Activated CD8-positive, alpha-beta T cell treated with anti-CD3 and anti-CD28 coated beads for 36 hours (primary cell): ENCODE measurements at regions of chr3 and their contacts with region 1.

Region 1: GRCh38 chr3:48674505-48674904 is 11.2 kb downstream of the NCKIPSD start:
- DNase-seq: no peak
- ATAC-seq: no peak
- H3K4me3 Mint-ChIP-seq: no peak overlapping the region
- H3K27ac Mint-ChIP-seq: no peak overlapping the region
- H3K4me1 Mint-ChIP-seq: no peaks in the 10 kb centered on the region
- H3K27me3 Mint-ChIP-seq: no peaks in the 10 kb centered on the region
- CTCF ChIP-seq: no peak

Region 2: DNA sequence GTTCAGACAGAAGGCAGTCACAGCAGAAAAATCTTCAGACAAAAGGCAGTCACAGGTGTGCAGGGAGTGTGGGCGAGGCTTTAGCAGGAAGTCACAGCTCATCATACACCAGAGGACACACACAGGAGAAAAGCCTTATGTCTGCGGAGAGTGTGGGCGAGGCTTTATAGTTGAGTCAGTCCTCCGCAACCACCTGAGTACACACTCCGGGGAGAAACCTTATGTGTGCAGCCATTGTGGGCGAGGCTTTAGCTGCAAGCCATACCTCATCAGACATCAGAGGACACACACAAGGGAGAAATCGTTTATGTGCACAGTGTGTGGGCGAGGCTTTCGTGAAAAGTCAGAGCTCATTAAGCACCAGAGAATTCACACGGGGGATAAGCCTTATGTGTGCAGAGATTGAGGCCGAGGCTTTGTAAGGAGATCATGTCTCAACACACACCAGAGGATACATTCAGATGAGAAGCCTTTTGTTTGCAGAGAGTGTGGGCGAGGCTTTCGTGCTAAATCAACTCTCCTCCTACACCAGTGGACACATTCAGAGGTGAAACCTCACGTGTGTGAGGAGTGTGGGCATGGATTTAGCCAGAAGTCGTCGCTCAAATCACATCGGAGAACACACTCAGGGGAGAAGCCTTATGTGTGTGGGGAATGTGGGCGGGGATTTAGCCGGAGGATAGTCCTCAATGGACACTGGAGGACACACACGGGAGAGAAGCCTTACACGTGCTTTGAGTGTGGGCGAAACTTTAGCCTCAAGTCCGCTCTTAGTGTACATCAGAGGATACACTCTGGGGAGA is 405.9 kb before region 1 on chr3:
- CTCF ChIA-PET with region 1: no interaction called
- POLR2A ChIA-PET with region 1: no interaction called
- intact Hi-C with region 1: no loop called
- DNase-seq: peak; percentile 98
- ATAC-seq: peak; percentile 93
- H3K4me3 Mint-ChIP-seq: peak overlapping the region; percentile 61
- H3K27ac Mint-ChIP-seq: peak overlapping the region; percentile 98
- H3K4me1 Mint-ChIP-seq: peaks cover 42% of the 10 kb centered on the region
- H3K27me3 Mint-ChIP-seq: no peaks in the 10 kb centered on the region
- CTCF ChIP-seq: no peak

Region 3: GRCh38 chr3:48532271-48532976 is 142.1 kb before region 1 on chr3:
- CTCF ChIA-PET with region 1: no interaction called
- POLR2A ChIA-PET with region 1: no interaction called
- intact Hi-C with region 1: no loop called
- DNase-seq: no peak
- ATAC-seq: no peak
- H3K4me3 Mint-ChIP-seq: no peak overlapping the region
- H3K27ac Mint-ChIP-seq: no peak overlapping the region
- H3K4me1 Mint-ChIP-seq: no peaks in the 10 kb centered on the region
- H3K27me3 Mint-ChIP-seq: no peaks in the 10 kb centered on the region
- CTCF ChIP-seq: no peak

Region 4: DNA sequence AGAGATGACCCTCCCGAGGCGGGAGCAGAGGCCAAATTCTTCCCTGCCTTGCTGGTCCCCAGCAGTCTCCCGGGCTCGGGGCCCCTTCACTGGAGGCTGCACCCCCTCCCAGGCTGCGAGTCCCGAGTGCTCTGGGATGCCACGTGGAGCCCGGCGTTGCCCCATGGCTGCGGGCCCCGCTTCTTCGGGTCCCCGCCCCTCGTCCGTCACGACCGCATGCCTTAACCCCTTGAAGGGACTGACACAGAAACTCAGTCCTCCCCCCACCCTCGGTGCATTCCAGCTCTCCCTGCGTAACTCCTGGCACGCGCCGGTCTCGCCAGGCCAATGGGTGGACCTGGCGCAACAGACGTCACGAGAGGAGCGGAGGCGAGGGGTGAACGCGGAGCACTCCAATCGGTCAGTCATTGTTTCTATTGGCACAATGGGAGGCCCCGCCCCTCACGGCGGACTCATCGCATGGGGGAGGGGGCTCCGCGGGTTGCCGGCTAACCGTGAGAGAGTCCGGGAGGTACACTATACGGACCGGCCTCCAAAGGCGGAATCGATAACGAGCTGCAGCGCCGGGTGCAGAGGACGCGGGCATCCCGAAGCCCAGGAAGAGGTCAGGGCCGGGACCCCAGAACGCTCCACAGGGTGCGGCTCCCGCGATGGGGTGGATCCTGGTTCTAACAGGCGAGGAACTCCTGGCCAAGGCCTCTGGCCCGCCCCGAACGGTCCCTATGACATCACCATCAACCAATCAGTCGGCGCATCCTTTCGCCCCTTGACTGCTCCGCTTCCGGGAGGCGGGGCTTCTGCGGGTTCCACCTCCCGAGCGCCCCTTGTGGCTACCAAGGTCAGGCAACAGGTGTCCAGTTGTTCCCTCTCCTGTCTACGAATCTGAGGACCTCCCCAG is 10.8 kb before region 1 on chr3:
- CTCF ChIA-PET with region 1: interaction called, 5 read pairs
- POLR2A ChIA-PET with region 1: interaction called, 26 read pairs
- intact Hi-C with region 1: no loop called
- DNase-seq: peak; percentile 97
- ATAC-seq: peak; percentile 87
- H3K4me3 Mint-ChIP-seq: peak overlapping the region; percentile 82
- H3K27ac Mint-ChIP-seq: peak overlapping the region; percentile 85
- H3K4me1 Mint-ChIP-seq: peaks cover 17% of the 10 kb centered on the region
- H3K27me3 Mint-ChIP-seq: peaks cover 21% of the 10 kb centered on the region
- CTCF ChIP-seq: peak; percentile 88

Region 5: DNA sequence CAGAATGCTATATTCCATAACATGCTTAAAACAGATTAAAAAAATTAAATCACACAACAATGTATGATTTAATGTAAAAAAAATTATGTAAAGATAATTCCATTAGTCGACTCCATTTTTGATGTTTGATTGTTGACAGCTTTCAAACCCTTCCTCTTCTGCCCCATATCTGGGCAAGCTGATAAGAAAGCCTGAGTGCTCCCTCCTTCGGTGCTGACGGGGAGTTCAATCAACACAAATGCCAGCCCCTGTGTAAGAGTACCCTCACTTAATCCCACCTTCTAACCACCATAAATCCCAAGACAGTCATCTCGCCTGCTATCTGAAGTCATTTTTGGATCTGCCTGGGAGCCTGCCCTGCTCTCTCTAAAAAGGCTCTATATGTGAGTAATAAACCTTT is 102.3 kb after region 1 on chr3:
- CTCF ChIA-PET with region 1: no interaction called
- POLR2A ChIA-PET with region 1: no interaction called
- intact Hi-C with region 1: no loop called
- DNase-seq: no peak
- ATAC-seq: no peak
- H3K4me3 Mint-ChIP-seq: no peak overlapping the region
- H3K27ac Mint-ChIP-seq: no peak overlapping the region
- H3K4me1 Mint-ChIP-seq: no peaks in the 10 kb centered on the region
- H3K27me3 Mint-ChIP-seq: no peaks in the 10 kb centered on the region
- CTCF ChIP-seq: no peak

Region 6: DNA sequence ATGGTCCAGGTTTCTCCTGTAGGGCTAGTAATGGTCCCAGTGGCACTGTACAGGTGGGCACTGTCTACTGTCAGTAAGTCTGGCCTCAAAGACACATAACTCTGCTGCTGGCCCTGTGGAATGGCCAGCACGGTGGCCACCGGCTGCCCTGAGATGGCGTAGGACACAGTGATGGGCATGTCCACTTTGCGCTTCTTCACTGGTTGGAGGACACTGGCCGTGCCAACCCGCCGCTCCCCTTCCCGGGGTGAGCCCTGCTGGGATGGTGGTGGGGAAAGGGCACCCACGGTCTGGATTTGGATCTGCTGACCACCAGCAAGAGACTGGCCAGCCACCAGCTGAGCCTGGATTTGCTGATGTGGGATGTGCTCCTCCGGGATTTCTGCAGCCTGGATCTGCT is 382.8 kb after region 1 on chr3:
- CTCF ChIA-PET with region 1: no interaction called
- POLR2A ChIA-PET with region 1: no interaction called
- intact Hi-C with region 1: no loop called
- DNase-seq: no peak
- ATAC-seq: no peak
- H3K4me3 Mint-ChIP-seq: no peak overlapping the region
- H3K27ac Mint-ChIP-seq: no peak overlapping the region
- H3K4me1 Mint-ChIP-seq: peaks cover 2% of the 10 kb centered on the region
- H3K27me3 Mint-ChIP-seq: no peaks in the 10 kb centered on the region
- CTCF ChIP-seq: no peak